Activated CD4-positive, alpha-beta T cell treated with anti-CD3 and anti-CD28 coated beads for 36 hours (primary cell): ENCODE measurements at regions of chr12 and their contacts with region 1.

Region 1: DNA sequence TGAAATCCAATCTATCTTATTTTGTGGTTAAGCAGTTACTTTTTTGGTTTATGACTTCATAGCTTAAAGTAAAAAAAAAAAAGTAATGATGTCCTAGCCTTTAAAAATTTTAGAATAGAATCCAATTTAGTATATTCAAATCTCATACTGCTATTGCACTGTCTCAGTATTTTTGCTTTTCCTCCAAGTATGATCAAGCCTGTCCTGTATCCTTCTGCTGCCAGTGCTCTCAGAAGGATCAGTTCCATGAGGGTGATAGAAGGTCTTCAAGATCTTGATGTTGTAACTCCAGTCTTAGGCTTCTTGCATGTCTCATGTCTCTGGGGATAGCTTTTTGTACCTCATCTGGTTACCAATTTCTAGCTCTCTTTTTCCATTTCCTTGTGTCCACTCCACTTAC is 324.2 kb upstream of the FAR2 start:
- DNase-seq: no peak
- ATAC-seq: no peak
- H3K4me3 Mint-ChIP-seq: no peak overlapping the region
- H3K27ac Mint-ChIP-seq: no peak overlapping the region
- H3K4me1 Mint-ChIP-seq: no peaks in the 10 kb centered on the region
- H3K27me3 Mint-ChIP-seq: peaks cover 2% of the 10 kb centered on the region

Region 2: GRCh38 chr12:28294300-28294699 is 530.5 kb before region 1 on chr12:
- CTCF ChIA-PET with region 1: no interaction called
- POLR2A ChIA-PET with region 1: no interaction called
- intact Hi-C with region 1: no loop called
- DNase-seq: no peak
- ATAC-seq: no peak
- H3K4me3 Mint-ChIP-seq: no peak overlapping the region
- H3K27ac Mint-ChIP-seq: no peak overlapping the region
- H3K4me1 Mint-ChIP-seq: peaks cover 5% of the 10 kb centered on the region
- H3K27me3 Mint-ChIP-seq: no peaks in the 10 kb centered on the region

Region 3: GRCh38 chr12:28882444-28882843 is 57.6 kb after region 1 on chr12:
- CTCF ChIA-PET with region 1: no interaction called
- POLR2A ChIA-PET with region 1: no interaction called
- intact Hi-C with region 1: loop called in 1 of 2 experiments (anchors 10 kb)
- DNase-seq: no peak
- ATAC-seq: no peak
- H3K4me3 Mint-ChIP-seq: no peak overlapping the region
- H3K27ac Mint-ChIP-seq: no peak overlapping the region
- H3K4me1 Mint-ChIP-seq: no peaks in the 10 kb centered on the region
- H3K27me3 Mint-ChIP-seq: peaks cover 5% of the 10 kb centered on the region